Prostate gland (tissue), 2 donors: ENCODE measurements at regions of chr5 and their contacts with region 1.

Region 1: GRCh38 chr5:122415030-122415800 is 103.2 kb downstream of the SNCAIP start:
- DNase-seq: peak; percentile 62
- H3K4me3 ChIP-seq: no peak overlapping the region
- H3K27ac ChIP-seq: no peak overlapping the region
- H3K4me1 ChIP-seq: no peaks in the 10 kb centered on the region
- H3K27me3 ChIP-seq: no peaks in the 10 kb centered on the region
- CTCF ChIP-seq: peak in 3 of 4 experiments; percentile 54 to 78 (median 71)
- POLR2A ChIP-seq: no peak

Region 2: GRCh38 chr5:122192497-122193496 is 222.4 kb before region 1 on chr5:
- intact Hi-C with region 1: loop called (anchors 2 kb)
- DNase-seq: peak; percentile 67
- H3K4me3 ChIP-seq: no peak overlapping the region
- H3K27ac ChIP-seq: no peak overlapping the region
- H3K4me1 ChIP-seq: no peaks in the 10 kb centered on the region
- H3K27me3 ChIP-seq: no peaks in the 10 kb centered on the region
- CTCF ChIP-seq: peak in 3 of 4 experiments; percentile 55 to 70 (median 63)
- POLR2A ChIP-seq: no peak